Gastrocnemius medialis (tissue), 4 donors: ENCODE measurements at regions of chr14 and their contacts with region 1.

Region 1: GRCh38 chr14:93994919-93995682 is 2.0 kb upstream of the CCDC197 start:
- DNase-seq: peak; percentile 88 to 94
- ATAC-seq: peak; percentile 83 to 85
- H3K4me3 ChIP-seq: peak overlapping the region in 3 of 4 donors; percentile 1 to 28 (median 15)
- H3K27ac ChIP-seq: peak overlapping the region; percentile 97 to 100 (median 97)
- H3K4me1 ChIP-seq: peaks cover 49 to 50% of the 10 kb centered on the region in 2 donors
- H3K27me3 ChIP-seq: no peaks in the 10 kb centered on the region
- CTCF ChIP-seq: no peak
- POLR2A ChIP-seq: peak; percentile 54 to 56

Region 2: DNA sequence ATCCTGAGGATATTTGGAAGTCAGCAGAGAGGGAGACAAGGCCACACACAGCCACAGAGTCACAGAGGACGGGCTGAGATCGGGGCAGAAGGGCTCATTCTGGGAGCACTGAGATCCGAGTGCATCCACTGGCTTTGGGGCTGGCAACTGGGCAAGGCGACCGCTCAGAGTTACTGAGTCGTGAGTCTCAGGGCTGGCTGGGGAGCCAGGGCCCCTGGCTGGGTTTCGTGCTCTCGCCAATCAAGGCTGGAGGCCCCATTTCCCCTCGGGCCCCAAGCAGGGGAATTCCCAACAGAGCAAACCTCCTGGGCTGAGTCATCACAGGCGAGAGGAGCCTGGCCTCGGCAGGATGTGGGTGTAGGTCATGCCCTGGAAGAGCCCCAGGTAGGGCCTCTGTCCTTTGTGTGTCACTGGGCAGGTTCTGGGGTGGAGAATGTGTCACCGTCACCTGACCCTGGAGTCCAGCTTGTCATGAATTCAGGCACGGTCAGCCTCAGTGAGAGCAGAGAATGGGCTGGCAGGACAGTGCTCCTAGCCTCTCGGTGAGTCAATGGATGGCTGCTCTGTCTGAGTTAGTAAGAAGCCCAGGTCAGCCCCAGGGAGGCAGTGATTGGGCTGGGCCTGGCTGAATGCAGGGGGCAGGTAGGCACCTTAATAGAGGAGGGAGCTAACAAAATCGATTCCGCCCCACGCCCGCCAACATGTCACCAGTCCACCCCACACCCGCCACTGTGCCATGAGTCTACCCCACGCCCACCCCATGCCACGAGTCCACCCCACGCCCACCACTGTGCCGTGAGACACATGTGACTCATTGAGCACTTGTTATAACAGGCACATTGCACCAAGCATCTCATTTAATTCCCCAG is 35.6 kb before region 1 on chr14:
- in situ Hi-C with region 1: no loop called
- intact Hi-C with region 1: loop called (anchors 5 kb)
- DNase-seq: peak; percentile 93 to 96
- ATAC-seq: peak; percentile 55 to 56
- H3K4me3 ChIP-seq: no peak overlapping the region
- H3K27ac ChIP-seq: peak overlapping the region; percentile 97 to 100 (median 98)
- H3K4me1 ChIP-seq: peaks cover 92 to 97% of the 10 kb centered on the region in 2 donors
- H3K27me3 ChIP-seq: no peaks in the 10 kb centered on the region
- CTCF ChIP-seq: no peak
- POLR2A ChIP-seq: peak; percentile 50 to 82

Region 3: GRCh38 chr14:93970549-93970946 is 24.6 kb before region 1 on chr14:
- in situ Hi-C with region 1: no loop called
- intact Hi-C with region 1: loop called (anchors 1 kb)
- DNase-seq: peak in 1 of 2 donors; percentile 69
- ATAC-seq: no peak
- H3K4me3 ChIP-seq: peak overlapping the region; percentile 31 to 80 (median 67)
- H3K27ac ChIP-seq: peak overlapping the region; percentile 97 to 100 (median 98)
- H3K4me1 ChIP-seq: peaks cover 66 to 75% of the 10 kb centered on the region in 2 donors
- H3K27me3 ChIP-seq: no peaks in the 10 kb centered on the region
- CTCF ChIP-seq: peak in 3 of 5 experiments; percentile 32 to 64 (median 36)
- POLR2A ChIP-seq: no peak

Region 4: GRCh38 chr14:93975791-93976476 is 19.2 kb before region 1 on chr14:
- in situ Hi-C with region 1: no loop called
- intact Hi-C with region 1: loop called (anchors 1 kb)
- DNase-seq: no peak
- ATAC-seq: no peak
- H3K4me3 ChIP-seq: peak overlapping the region; percentile 61 to 80 (median 76)
- H3K27ac ChIP-seq: peak overlapping the region; percentile 97 to 100 (median 98)
- H3K4me1 ChIP-seq: peaks cover 47 to 54% of the 10 kb centered on the region in 2 donors
- H3K27me3 ChIP-seq: no peaks in the 10 kb centered on the region
- CTCF ChIP-seq: peak in 4 of 5 experiments; percentile 27 to 75 (median 38)
- POLR2A ChIP-seq: no peak